Dorsolateral prefrontal cortex (tissue), 120 donors: ENCODE measurements at regions of chr9 and their contacts with region 1.

Region 1: DNA sequence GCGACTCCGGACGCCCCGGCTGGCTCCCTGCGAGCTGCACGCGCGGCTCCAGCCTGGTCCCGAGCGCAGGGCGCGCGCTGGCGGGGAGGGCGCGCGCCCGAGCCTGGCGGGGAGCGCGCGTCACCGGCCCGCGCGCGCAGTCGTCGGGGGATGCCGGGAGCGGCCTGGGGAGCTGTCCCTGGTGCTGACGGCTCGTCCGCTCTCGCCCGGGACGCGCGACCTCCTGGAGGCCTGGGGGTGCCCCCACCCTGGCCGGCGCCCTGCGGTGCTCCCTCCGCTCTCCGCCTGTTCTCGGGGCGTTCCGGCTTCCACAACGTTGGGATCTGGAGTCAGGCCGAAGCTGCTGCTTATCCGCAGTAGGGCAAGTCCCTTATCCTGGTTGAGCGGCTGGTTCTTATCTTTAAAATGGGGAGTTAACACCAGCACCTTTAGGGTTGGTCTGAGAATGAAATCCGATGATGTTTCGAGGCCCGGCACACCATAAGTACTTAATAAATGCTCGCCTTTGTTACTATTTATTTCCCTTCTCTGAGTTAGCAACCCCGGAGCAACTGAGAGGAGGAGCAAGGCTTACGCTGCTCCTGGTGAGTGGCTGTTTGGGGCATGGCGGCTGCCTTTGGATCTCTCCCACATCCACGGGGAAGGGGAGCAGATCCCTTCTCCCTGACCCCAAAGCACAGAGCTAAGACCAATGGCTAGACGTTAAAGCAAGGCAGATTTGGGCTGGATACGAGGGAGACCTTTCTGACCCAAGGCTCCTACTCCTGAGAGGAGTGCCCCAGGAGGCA is at the start of gene FAM163B:
- DNase-seq: peak in 3 of 10 donors; percentile 49 to 74 (median 57)
- H3K4me3 ChIP-seq: peak within 1 kb of the TSS in 58 of 59 donors; percentile 17 to 70 (median 54)
- H3K27ac ChIP-seq: peak within 1 kb of the TSS in 54 of 59 donors; percentile 43 to 88 (median 78)
- H3K27me3 ChIP-seq: peaks cover 0 to 66% (median 11%) of the 10 kb centered on the region in 45 donors
- CTCF ChIP-seq: no peak
- total RNA-seq, gene FAM163B: 34.8 to 183 (median 111) TPM

Region 2: GRCh38 chr9:133701862-133702797 is 92.6 kb after region 1 on chr9:
- intact Hi-C with region 1: loop called (anchors 1 to 10 kb)
- DNase-seq: peak in 4 of 10 donors; percentile 23 to 43 (median 31)
- H3K4me3 ChIP-seq: peak overlapping the region in 55 of 59 donors; percentile 1 to 60 (median 40)
- H3K27ac ChIP-seq: peak overlapping the region in 55 of 59 donors; percentile 17 to 88 (median 74)
- H3K27me3 ChIP-seq: peaks cover 0 to 15% (median 0%) of the 10 kb centered on the region in 45 donors
- CTCF ChIP-seq: no peak